SK-N-SH (cell line): ENCODE measurements at regions of chr1 and their contacts with region 1.

Region 1: GRCh38 chr1:25729751-25730644 is 70.0 kb upstream of the SELENON start:
- DNase-seq: no peak
- H3K4me3 ChIP-seq: no peak overlapping the region
- H3K27ac ChIP-seq: peak overlapping the region in 1 of 2 experiments; percentile 34; a peak in 2 of 4 replicates
- H3K4me1 ChIP-seq: peaks cover 0 to 77% of the 10 kb centered on the region in 2 experiments; a peak in 2 of 4 replicates
- H3K27me3 ChIP-seq: no peaks in the 10 kb centered on the region
- CTCF ChIP-seq: no peak
- EP300 ChIP-seq: no peak
- RAD21 ChIP-seq: no peak

Region 2: GRCh38 chr1:25715888-25716287 is 14.1 kb before region 1 on chr1:
- CTCF ChIA-PET with region 1: interaction called, 16 read pairs
- POLR2A ChIA-PET with region 1: no interaction called
- DNase-seq: no peak
- H3K4me3 ChIP-seq: no peak overlapping the region
- H3K27ac ChIP-seq: no peak overlapping the region
- H3K4me1 ChIP-seq: no peaks in the 10 kb centered on the region; a peak in 2 of 4 replicates
- H3K27me3 ChIP-seq: no peaks in the 10 kb centered on the region; the same call in 1 of the 2 replicates
- CTCF ChIP-seq: no peak
- EP300 ChIP-seq: no peak
- RAD21 ChIP-seq: no peak

Region 3: DNA sequence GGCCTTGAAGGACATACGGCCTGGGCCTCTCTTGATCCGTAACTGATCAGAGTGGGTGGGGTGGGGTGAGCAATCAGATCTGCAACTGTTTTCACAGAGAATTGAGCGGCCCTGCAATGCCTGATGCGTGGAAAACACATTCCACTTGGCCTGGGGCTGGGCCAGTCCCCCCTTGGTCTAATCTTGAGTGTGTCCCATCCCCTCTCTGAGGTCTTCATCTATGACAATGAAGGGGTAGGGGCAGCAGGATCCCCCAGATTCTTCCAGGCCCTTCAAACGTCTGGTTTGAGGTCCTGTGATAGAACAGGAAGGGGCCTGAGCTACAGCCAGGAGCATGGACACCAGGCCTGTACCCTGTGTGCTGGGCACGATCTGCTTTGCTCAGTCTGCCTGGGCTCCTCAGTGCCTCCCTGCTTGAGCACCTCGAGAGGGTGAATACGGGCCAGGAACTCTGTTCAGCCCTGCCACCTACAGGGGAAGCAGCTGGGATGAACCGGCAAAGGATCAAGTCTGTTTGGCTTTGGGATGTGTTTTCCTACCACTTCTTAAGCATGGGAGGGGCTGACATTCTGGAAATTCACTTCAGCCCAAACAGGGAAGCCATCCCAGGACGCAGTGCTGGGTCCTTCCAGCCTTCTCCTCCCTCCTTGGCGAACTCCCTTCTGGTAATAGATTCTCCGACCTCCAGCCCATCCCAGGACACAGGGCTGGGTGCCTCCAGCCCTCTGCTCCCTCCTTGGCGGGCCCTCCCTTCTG is 14.0 kb after region 1 on chr1:
- CTCF ChIA-PET with region 1: interaction called, 11 read pairs
- POLR2A ChIA-PET with region 1: interaction called, 4 read pairs
- DNase-seq: peak; percentile 69
- H3K4me3 ChIP-seq: no peak overlapping the region
- H3K27ac ChIP-seq: peak overlapping the region in 1 of 2 experiments; percentile 54; a peak in 1 of 4 replicates
- H3K4me1 ChIP-seq: peaks cover 0 to 40% of the 10 kb centered on the region in 2 experiments; a peak in 1 of 4 replicates
- H3K27me3 ChIP-seq: no peaks in the 10 kb centered on the region
- CTCF ChIP-seq: 0 out of 2 replicates have a peak, but pooled peaks have one; percentile 27
- EP300 ChIP-seq: no peak
- RAD21 ChIP-seq: peak; percentile 76